Uterus (tissue), 4 donors: ENCODE measurements at regions of chr6 and their contacts with region 1.

Region 1: GRCh38 chr6:136792410-136793262 is at the start of gene MAP3K5:
- DNase-seq: peak; percentile 92 to 93
- H3K4me3 ChIP-seq: peak within 1 kb of the TSS; percentile 65 to 92
- H3K27ac ChIP-seq: peak within 1 kb of the TSS; percentile 92 to 96
- H3K4me1 ChIP-seq: no peaks in the 10 kb centered on the region
- H3K27me3 ChIP-seq: no peaks in the 10 kb centered on the region
- CTCF ChIP-seq: peak; percentile 47 to 88 (median 78)
- POLR2A ChIP-seq: peak in 1 of 2 donors; percentile 32
- total RNA-seq, gene MAP3K5: 9.5 to 67.1 (median 15.4) TPM

Region 2: DNA sequence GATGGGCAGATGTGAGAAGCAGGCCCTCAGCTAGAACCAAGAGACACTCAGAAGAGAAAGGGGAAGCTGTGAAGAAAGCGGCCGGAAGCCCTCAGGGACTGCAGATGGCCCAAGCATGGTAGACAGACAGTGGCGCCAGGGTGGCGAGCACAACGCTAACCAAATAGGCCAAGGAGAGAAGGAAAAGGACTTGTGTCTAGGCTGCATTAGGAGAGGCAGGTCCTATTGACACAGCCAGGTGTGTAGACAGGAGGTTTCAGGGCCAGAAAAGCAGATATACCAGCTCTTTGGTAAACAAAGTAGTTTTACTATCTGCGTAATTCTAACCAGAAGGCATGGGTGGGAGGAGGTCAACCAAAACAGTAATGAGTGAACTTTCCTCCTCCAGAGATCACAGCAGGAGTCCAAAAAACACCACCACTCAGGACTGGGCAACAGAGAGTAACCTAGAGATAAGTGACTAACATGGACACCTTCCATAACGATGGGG is 226.6 kb before region 1 on chr6:
- intact Hi-C with region 1: no loop called
- DNase-seq: no peak
- H3K4me3 ChIP-seq: no peak overlapping the region
- H3K27ac ChIP-seq: no peak overlapping the region
- H3K4me1 ChIP-seq: no peaks in the 10 kb centered on the region
- H3K27me3 ChIP-seq: no peaks in the 10 kb centered on the region
- CTCF ChIP-seq: no peak
- POLR2A ChIP-seq: no peak

Region 3: DNA sequence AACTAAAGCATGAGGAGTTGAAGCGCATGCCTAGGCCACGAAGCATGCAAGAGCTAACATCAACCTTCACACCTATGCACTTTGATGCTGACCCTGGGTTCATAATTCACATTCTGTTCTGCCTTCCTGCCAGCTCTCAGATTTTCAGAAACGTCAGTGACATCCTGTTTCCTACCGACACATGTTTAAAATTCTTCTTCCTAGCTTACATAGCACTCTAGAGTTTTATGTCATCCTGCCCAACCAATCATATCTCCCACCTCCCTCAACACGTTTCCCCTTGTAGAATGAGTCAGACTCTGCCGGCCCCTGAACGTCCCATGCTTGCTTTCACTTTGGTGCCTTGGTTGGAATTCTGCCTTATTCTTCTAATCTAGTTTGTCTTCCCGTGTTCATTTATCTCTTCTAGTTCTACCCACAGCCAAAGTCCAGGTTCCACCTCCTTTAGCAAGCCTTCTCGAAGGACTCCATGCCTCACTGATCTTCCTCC is 145.2 kb before region 1 on chr6:
- intact Hi-C with region 1: loop called (anchors 5 kb)
- DNase-seq: peak in 1 of 2 donors; percentile 21
- H3K4me3 ChIP-seq: no peak overlapping the region
- H3K27ac ChIP-seq: peak overlapping the region; percentile 19 to 40
- H3K4me1 ChIP-seq: peaks cover 0 to 4% of the 10 kb centered on the region in 2 donors
- H3K27me3 ChIP-seq: no peaks in the 10 kb centered on the region
- CTCF ChIP-seq: no peak
- POLR2A ChIP-seq: no peak

Region 4: GRCh38 chr6:136859430-136859829 is 66.8 kb after region 1 on chr6:
- intact Hi-C with region 1: no loop called
- DNase-seq: no peak
- H3K4me3 ChIP-seq: no peak overlapping the region
- H3K27ac ChIP-seq: no peak overlapping the region
- H3K4me1 ChIP-seq: no peaks in the 10 kb centered on the region
- H3K27me3 ChIP-seq: no peaks in the 10 kb centered on the region
- CTCF ChIP-seq: no peak
- POLR2A ChIP-seq: no peak